GM23248 (cell line): ENCODE measurements at regions of chr2 and their contacts with region 1.

Region 1: GRCh38 chr2:158006961-158007719 is 94.5 kb upstream of the UPP2 start:
- DNase-seq: no peak
- H3K4me3 ChIP-seq: no peak overlapping the region
- H3K27ac ChIP-seq: no peak overlapping the region
- H3K4me1 ChIP-seq: no peaks in the 10 kb centered on the region
- H3K27me3 ChIP-seq: no peaks in the 10 kb centered on the region

Region 2: DNA sequence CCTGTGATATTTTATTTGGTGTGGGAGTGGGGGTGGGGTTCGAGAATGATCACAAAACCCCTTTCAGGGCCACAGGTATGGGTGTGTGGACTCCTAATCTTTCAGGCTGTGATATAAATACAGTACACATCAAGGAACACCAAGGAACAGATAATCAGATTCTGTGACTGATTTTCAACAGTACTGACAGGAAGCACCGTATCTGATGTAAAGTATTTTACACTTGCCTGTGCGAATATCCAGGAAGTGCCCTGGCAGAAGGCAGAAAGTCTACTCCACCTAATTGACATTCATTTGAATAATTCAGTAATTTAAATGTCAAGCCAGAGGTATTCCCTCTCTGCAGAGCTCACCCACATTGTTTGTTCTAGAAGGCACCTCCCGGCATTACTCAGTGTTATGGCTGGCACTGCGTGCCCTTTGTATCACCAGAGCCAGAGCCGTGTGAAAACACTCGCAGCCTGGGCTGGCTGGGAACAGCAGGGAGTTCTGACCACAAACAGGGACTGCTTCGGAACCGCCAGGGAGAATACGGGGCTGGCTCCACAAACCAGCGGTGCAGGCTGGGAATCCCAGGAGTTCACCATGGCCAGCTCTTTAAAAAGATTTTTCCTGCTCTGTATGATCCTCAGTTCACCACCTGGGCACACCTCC is 222.8 kb before region 1 on chr2:
- in situ Hi-C with region 1: loop called (anchors 5 kb)
- DNase-seq: peak; percentile 78
- H3K4me3 ChIP-seq: no peak overlapping the region
- H3K27ac ChIP-seq: no peak overlapping the region
- H3K4me1 ChIP-seq: peaks cover 39% of the 10 kb centered on the region
- H3K27me3 ChIP-seq: no peaks in the 10 kb centered on the region

Region 3: DNA sequence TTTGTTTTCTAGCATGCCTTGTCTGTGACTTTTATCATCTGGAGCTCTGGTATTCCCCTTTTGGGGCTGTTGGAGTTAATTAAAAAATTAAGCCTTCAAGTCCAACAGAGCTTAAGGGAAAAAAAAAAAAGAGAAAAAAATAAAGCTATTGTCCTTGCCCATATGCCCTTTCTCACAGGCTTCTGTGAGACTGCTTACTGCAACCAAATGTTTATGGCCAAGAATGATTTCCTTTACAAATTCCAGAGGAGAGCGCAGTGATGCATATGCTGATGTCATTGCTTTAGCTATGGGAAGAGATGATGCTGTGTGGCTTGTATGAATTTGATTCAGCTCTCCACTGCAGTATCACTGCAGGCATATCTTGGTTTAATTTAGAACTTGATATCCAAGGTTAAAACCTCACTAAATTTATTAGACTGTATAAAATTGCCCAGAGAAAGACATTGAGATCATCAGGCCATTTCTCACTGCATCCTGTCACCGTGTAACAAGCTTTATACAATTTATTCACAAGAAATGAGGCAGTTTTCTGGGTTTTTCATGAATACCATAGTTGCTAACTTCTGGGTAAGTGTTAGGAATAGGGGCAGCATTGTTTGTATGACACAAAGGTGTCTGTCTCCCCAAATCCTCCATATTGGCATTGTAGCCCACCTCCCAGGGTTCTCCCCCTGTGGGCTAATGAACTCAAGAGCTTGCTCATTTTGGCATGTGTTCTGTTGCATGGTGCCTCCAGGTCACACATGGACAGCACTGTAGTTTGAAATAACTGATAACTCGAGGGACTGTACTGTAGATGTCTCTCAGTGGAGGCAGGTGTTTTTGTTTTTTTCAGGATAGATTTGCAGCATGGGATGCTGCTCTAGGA is 1046.3 kb after region 1 on chr2:
- in situ Hi-C with region 1: no loop called
- DNase-seq: peak; percentile 40
- H3K4me3 ChIP-seq: no peak overlapping the region
- H3K27ac ChIP-seq: no peak overlapping the region
- H3K4me1 ChIP-seq: no peaks in the 10 kb centered on the region
- H3K27me3 ChIP-seq: no peaks in the 10 kb centered on the region